ENCODE measurements at regions of chr1 and their contacts with region 1.

Region 1: GRCh38 chr1:66282343-66282852 is 251.6 kb upstream of the SGIP1 start:
- DNase-seq: peak; percentile 60
- H3K4me3 Mint-ChIP-seq: peak overlapping the region; percentile 35
- H3K27ac Mint-ChIP-seq: peak overlapping the region; percentile 86
- H3K4me1 Mint-ChIP-seq: peaks cover 69% of the 10 kb centered on the region
- H3K27me3 Mint-ChIP-seq: peaks cover 19% of the 10 kb centered on the region

Region 2: GRCh38 chr1:65866439-65866838 is 416.0 kb before region 1 on chr1:
- intact Hi-C with region 1: loop called (anchors 2 kb)
- DNase-seq: no peak
- H3K4me3 Mint-ChIP-seq: no peak overlapping the region
- H3K27ac Mint-ChIP-seq: no peak overlapping the region
- H3K4me1 Mint-ChIP-seq: peaks cover 11% of the 10 kb centered on the region
- H3K27me3 Mint-ChIP-seq: peaks cover 7% of the 10 kb centered on the region

Region 3: GRCh38 chr1:66271216-66271903 is 11.0 kb before region 1 on chr1:
- intact Hi-C with region 1: loop called (anchors 1 kb)
- DNase-seq: no peak
- H3K4me3 Mint-ChIP-seq: no peak overlapping the region
- H3K27ac Mint-ChIP-seq: peak overlapping the region; percentile 44
- H3K4me1 Mint-ChIP-seq: peaks cover 62% of the 10 kb centered on the region
- H3K27me3 Mint-ChIP-seq: peaks cover 21% of the 10 kb centered on the region

Region 4: DNA sequence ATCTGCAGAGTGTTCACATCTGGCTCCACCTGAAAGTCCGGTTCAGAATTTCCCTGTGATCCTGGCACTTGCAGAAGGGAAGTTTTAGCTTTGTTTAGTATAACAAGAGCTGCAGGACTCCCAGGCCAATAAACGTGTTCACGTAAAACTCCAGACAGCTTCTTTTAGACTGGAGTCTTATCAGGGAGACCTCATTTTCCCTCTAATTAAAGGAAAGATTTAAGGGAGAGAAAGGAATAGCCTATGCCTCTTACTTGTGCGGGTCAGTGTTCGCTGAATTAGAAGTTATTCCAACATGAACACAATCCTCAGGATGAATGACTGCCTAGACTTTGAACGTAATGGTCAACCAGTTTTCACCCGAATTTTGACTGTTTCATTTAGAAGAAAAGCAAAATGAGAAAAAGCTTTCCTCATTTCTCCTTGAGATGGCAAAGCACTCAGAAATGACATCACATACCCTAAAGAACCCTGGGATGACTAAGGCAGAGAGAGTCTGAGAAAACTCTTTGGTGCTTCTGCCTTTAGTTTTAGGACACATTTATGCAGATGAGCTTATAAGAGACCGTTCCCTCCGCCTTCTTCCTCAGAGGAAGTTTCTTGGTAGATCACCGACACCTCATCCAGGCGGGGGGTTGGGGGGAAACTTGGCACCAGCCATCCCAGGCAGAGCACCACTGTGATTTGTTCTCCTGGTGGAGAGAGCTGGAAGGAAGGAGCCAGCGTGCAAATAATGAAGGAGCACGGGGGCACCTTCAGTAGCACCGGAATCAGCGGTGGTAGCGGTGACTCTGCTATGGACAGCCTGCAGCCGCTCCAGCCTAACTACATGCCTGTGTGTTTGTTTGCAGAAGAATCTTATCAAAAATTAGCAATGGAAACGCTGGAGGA is 49.5 kb after region 1 on chr1:
- intact Hi-C with region 1: loop called (anchors 1 kb)
- DNase-seq: no peak
- H3K4me3 Mint-ChIP-seq: peak overlapping the region; percentile 97
- H3K27ac Mint-ChIP-seq: peak overlapping the region; percentile 90
- H3K4me1 Mint-ChIP-seq: peaks cover 62% of the 10 kb centered on the region
- H3K27me3 Mint-ChIP-seq: no peaks in the 10 kb centered on the region

Region 5: DNA sequence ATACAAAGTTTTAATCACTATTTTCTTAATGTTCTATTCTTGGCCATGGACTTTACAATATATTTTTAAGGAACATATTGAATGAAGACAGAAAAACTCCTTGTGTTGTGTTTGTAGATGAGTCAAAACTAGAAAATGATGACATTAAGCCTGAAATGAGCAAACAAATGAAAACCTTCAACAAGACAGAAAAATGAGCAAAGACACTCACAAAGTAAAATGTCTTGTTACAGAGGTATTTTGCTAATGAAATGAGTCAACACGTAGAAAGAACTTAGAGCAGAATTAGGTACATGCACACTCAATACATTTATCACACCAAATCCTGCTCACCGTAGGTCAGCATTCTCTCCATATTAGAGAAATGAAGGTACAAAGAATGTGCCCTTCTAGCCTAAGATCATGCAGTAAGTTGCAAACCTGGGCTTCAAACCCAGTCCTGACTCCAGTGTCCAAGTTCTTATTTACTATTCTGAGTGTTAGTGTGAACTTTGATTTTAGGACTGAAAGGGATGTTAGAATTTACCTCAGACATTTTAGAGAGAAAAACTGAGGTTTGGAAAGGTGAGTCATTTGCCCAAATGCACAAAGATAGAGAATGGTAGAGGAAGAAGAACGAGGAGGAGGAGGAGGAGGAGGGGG is 117.6 kb after region 1 on chr1:
- intact Hi-C with region 1: loop called (anchors 1 kb)
- DNase-seq: no peak
- H3K4me3 Mint-ChIP-seq: no peak overlapping the region
- H3K27ac Mint-ChIP-seq: peak overlapping the region; percentile 77
- H3K4me1 Mint-ChIP-seq: peaks cover 35% of the 10 kb centered on the region
- H3K27me3 Mint-ChIP-seq: no peaks in the 10 kb centered on the region

Measured in activated T-helper 2 cell treated with anti-CD3 and anti-CD28 coated beads, Interferon-gamma antibody, Interleukin-2, Interleukin-4, amounts not matched to agents 10 μg/mL and 5 μg/mL and 100 μg/mL, durations not matched to agents 14 hours and 24 hours and 36 hours (primary cell).